Panc1 (cell line): ENCODE measurements at regions of chr1 and their contacts with region 1.

Region 1: GRCh38 chr1:185559684-185560331 is 174.4 kb upstream of the HMCN1 start:
- DNase-seq: no peak
- ATAC-seq: peak; percentile 62; the same call in 1 of the 2 replicates
- H3K4me3 ChIP-seq: no peak overlapping the region
- H3K27ac ChIP-seq: no peak overlapping the region
- H3K4me1 ChIP-seq: no peaks in the 10 kb centered on the region
- H3K27me3 ChIP-seq: no peaks in the 10 kb centered on the region
- CTCF ChIP-seq: peak; percentile 30; the same call in 1 of the 2 replicates

Region 2: DNA sequence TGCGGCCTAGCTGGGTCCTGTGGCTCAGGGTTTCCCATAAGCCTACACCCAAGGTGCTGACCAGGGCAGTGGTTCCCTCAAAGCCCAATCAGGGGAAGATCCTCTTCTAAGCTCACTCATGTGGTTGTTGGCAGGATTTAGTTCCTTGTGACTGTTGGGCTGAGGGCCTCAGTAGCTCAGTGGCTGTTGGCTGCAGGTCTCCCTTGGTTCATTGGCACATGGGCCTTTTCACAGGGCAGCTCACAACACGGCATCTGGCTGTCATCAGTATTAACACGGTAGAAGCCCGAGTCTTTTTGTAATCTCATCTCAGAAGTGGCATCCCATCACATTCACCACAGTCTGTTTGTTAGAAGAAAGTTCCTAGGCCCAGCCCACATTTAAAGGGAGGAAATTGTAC is 13.8 kb before region 1 on chr1:
- CTCF ChIA-PET with region 1: no interaction called
- POLR2A ChIA-PET with region 1: no interaction called
- in situ Hi-C with region 1: no loop called
- intact Hi-C with region 1: no loop called
- DNase-seq: no peak
- ATAC-seq: no peak
- H3K4me3 ChIP-seq: no peak overlapping the region
- H3K27ac ChIP-seq: peak overlapping the region; percentile 27; the same call in 1 of the 2 replicates
- H3K4me1 ChIP-seq: peaks cover 6% of the 10 kb centered on the region
- H3K27me3 ChIP-seq: no peaks in the 10 kb centered on the region
- CTCF ChIP-seq: no peak

Region 3: GRCh38 chr1:185595835-185596667 is 36.2 kb after region 1 on chr1:
- CTCF ChIA-PET with region 1: no interaction called
- POLR2A ChIA-PET with region 1: no interaction called
- in situ Hi-C with region 1: no loop called
- intact Hi-C with region 1: loop called (anchors 1 kb)
- DNase-seq: peak; percentile 27
- ATAC-seq: peak; percentile 84
- H3K4me3 ChIP-seq: no peak overlapping the region
- H3K27ac ChIP-seq: peak overlapping the region; percentile 81
- H3K4me1 ChIP-seq: peaks cover 12% of the 10 kb centered on the region
- H3K27me3 ChIP-seq: no peaks in the 10 kb centered on the region
- CTCF ChIP-seq: peak; percentile 81

Region 4: DNA sequence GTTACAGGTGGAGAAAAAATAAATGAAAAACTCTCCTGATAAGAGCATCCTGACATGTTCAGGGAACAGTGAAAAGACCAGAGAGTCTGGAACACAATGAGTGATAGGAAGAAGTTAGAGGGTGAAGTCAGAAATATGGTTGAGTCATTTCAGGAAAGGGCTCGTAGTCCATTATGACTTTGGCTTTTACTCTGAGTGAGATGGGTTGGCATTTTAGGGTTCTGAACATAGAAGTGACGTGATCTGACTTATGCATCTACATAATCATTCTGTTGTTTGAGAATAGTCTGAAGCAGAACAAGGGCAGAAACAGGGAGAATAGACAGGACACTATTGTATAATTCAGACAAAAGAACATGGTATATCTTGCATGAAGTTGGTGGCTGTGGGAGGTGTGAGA is 180.2 kb after region 1 on chr1:
- CTCF ChIA-PET with region 1: no interaction called
- POLR2A ChIA-PET with region 1: no interaction called
- in situ Hi-C with region 1: no loop called
- intact Hi-C with region 1: no loop called
- DNase-seq: no peak
- ATAC-seq: no peak
- H3K4me3 ChIP-seq: no peak overlapping the region
- H3K27ac ChIP-seq: no peak overlapping the region
- H3K4me1 ChIP-seq: no peaks in the 10 kb centered on the region
- H3K27me3 ChIP-seq: peaks cover 8% of the 10 kb centered on the region
- CTCF ChIP-seq: no peak